Mammary epithelial cell (primary cell): ENCODE measurements at regions of chr18 and their contacts with region 1.

Region 1: GRCh38 chr18:58671111-58671631 is at the start of gene MALT1:
- DNase-seq: peak; percentile 89
- H3K4me3 ChIP-seq: peak within 1 kb of the TSS; percentile 75 to 98 (median 85)
- H3K27ac ChIP-seq: peak within 1 kb of the TSS; percentile 92
- H3K4me1 ChIP-seq: peaks cover 50% of the 10 kb centered on the region
- H3K27me3 ChIP-seq: no peaks in the 10 kb centered on the region
- CTCF ChIP-seq: no peak
- total RNA-seq, gene MALT1: 34.2 to 43.0 TPM

Region 2: GRCh38 chr18:58429442-58429841 is 241.7 kb before region 1 on chr18:
- CTCF ChIA-PET with region 1: no interaction called
- dilution Hi-C with region 1: no loop called
- in situ Hi-C with region 1: no loop called
- intact Hi-C with region 1: no loop called
- DNase-seq: no peak
- H3K4me3 ChIP-seq: no peak overlapping the region
- H3K27ac ChIP-seq: no peak overlapping the region
- H3K4me1 ChIP-seq: no peaks in the 10 kb centered on the region
- H3K27me3 ChIP-seq: no peaks in the 10 kb centered on the region
- CTCF ChIP-seq: no peak

Region 3: GRCh38 chr18:58541789-58542425 is 129.3 kb before region 1 on chr18:
- CTCF ChIA-PET with region 1: no interaction called
- dilution Hi-C with region 1: no loop called
- in situ Hi-C with region 1: no loop called
- intact Hi-C with region 1: loop called (anchors 5 kb)
- DNase-seq: peak; percentile 98
- H3K4me3 ChIP-seq: no peak overlapping the region
- H3K27ac ChIP-seq: peak overlapping the region; percentile 78
- H3K4me1 ChIP-seq: peaks cover 34% of the 10 kb centered on the region
- H3K27me3 ChIP-seq: no peaks in the 10 kb centered on the region
- CTCF ChIP-seq: no peak

Region 4: GRCh38 chr18:58584200-58585127 is 86.7 kb before region 1 on chr18:
- CTCF ChIA-PET with region 1: no interaction called
- dilution Hi-C with region 1: no loop called
- in situ Hi-C with region 1: no loop called
- intact Hi-C with region 1: loop called (anchors 2 kb)
- DNase-seq: peak; percentile 60
- H3K4me3 ChIP-seq: no peak overlapping the region
- H3K27ac ChIP-seq: peak overlapping the region; percentile 1
- H3K4me1 ChIP-seq: peaks cover 30% of the 10 kb centered on the region
- H3K27me3 ChIP-seq: no peaks in the 10 kb centered on the region
- CTCF ChIP-seq: peak in 1 of 2 donors; percentile 30

Region 5: DNA sequence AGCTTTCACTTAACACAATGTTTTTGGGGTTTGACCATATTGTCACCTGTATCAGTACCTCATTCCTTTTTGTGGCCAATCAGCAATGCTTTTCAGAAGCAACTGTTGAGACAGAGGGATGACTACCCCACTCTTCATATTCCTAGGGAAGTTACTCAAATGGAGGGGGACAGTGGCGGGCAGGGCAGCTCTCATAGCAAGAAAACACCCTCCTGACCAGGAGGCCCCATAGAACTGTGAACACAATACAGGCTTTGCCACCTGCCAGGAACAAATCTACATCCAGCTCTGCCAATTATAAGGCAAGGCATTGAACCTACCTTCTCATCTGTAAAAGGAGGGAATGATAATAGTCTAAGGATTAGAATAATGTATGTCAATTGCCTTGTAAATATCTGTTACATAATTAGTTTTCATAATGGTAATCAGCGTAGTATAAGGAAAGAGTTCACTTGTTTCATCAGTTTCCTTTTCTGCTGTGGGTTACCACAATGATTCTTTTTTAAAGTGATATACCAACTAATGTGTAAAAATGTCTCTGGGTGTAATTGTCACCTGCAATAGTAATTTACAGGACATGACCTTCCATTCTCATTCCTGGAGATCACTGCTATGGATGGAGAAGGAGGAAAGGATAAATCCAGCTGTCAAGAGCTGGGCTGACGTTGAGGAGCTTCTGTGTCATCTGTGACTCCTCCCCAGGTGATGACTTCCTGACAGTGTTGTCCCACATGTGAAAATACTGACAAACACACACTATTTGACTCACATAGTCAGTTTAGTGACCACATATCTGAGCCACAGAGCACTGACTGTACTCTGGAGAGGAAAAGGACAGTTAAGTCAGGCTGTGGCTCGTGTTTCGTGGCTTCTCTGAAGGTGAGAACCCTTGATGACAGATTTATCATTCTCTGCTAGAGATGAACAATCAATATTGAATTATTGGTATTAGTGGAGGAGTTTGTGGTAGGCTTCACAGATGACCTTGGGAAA is 55.7 kb before region 1 on chr18:
- CTCF ChIA-PET with region 1: no interaction called
- dilution Hi-C with region 1: no loop called
- in situ Hi-C with region 1: no loop called
- intact Hi-C with region 1: loop called (anchors 5 kb)
- DNase-seq: peak; percentile 46
- H3K4me3 ChIP-seq: no peak overlapping the region
- H3K27ac ChIP-seq: no peak overlapping the region
- H3K4me1 ChIP-seq: peaks cover 18% of the 10 kb centered on the region
- H3K27me3 ChIP-seq: no peaks in the 10 kb centered on the region
- CTCF ChIP-seq: no peak

Region 6: GRCh38 chr18:58863539-58864145 is 192.5 kb after region 1 on chr18:
- CTCF ChIA-PET with region 1: no interaction called
- dilution Hi-C with region 1: no loop called
- in situ Hi-C with region 1: no loop called
- intact Hi-C with region 1: loop called (anchors 10 kb)
- DNase-seq: no peak
- H3K4me3 ChIP-seq: peak overlapping the region; percentile 28 to 54 (median 46)
- H3K27ac ChIP-seq: peak overlapping the region; percentile 58
- H3K4me1 ChIP-seq: peaks cover 70% of the 10 kb centered on the region
- H3K27me3 ChIP-seq: no peaks in the 10 kb centered on the region
- CTCF ChIP-seq: no peak